Calu3 (cell line): ENCODE measurements at regions of chr11 and their contacts with region 1.

Region 1: GRCh38 chr11:95764267-95764898 is 25.2 kb downstream of the FAM76B start:
- DNase-seq: no peak
- H3K4me3 Mint-ChIP-seq: no peak overlapping the region
- H3K27ac Mint-ChIP-seq: no peak overlapping the region
- H3K4me1 Mint-ChIP-seq: no peaks in the 10 kb centered on the region
- H3K27me3 Mint-ChIP-seq: no peaks in the 10 kb centered on the region
- CTCF ChIP-seq: peak; percentile 55

Region 2: DNA sequence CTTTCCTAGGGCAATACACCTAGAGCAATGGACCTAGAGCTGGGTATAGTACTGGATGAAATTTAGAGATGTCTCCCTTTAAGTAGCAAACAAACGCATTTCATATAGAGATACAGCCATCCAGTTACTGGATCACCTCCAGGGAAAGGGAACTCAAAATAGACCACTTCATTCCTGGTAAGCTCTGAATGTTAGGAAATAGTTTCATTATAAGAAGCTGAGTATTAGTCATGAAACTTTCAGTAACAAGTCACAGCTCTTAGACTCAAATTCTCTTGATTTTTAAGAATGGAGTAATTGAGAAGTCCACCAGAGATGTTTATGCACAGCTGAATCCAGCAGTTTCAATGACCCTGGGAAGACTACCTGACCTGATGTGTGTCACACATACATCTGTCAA is 196.7 kb before region 1 on chr11:
- CTCF ChIA-PET with region 1: no interaction called
- intact Hi-C with region 1: loop called (anchors 10 kb)
- DNase-seq: no peak
- H3K4me3 Mint-ChIP-seq: no peak overlapping the region
- H3K27ac Mint-ChIP-seq: no peak overlapping the region
- H3K4me1 Mint-ChIP-seq: no peaks in the 10 kb centered on the region
- H3K27me3 Mint-ChIP-seq: peaks cover 15% of the 10 kb centered on the region
- CTCF ChIP-seq: no peak